ENCODE measurements at regions of chr2 and their contacts with region 1.

Region 1: DNA sequence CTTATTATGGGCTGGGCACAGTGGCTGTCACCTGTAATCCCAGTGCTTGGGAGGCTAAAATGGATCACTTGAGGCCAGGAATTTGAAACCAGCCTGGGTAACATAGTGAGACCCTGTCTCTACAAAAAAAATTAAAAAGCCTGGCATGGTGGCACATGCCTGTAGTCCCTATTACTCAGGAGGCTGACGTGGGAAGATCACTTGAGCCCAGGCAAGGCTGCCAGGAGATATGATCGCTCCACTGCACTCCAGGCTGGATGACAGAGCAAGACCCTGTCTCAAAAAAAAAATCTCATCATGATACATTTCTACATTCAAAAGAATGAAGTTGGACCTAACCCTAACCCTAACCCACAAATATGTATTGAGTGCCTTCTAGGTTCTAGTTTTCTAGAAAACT is 20.2 kb upstream of the CYP27A1 start:
- DNase-seq: no peak

Region 2: GRCh38 chr2:218033590-218034496 is 728.0 kb before region 1 on chr2:
- intact Hi-C with region 1: loop called in 1 of 2 experiments (anchors 5 kb)
- DNase-seq: peak; percentile 76

Measured in posterior vena cava (tissue), 2 donors.